Colonic mucosa (tissue), 4 donors: ENCODE measurements at regions of chrX and their contacts with region 1.

Region 1: DNA sequence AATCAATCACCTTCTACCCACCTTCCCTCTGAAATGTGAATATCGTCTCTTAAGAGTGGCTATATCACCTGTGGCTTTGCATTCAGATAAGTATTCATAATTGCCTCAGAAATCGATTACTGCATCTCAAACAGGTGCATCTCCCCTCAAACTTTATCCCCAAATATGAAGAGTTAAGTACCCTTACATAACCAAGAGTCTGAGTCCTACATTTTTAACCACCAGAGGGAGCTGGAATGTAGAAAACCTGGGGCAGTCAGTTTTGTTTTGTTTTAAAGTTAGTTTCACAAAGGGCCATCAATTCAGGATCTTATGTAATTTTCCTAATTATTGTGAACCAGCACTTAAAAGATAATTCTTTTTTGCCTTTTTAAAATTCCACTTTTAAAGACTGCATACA is 5.7 kb downstream of the TCEANC start:
- DNase-seq: peak; percentile 33
- H3K4me3 ChIP-seq: no peak overlapping the region
- H3K27ac ChIP-seq: no peak overlapping the region
- H3K4me1 ChIP-seq: peaks cover 6% of the 10 kb centered on the region
- H3K27me3 ChIP-seq: no peaks in the 10 kb centered on the region
- CTCF ChIP-seq: peak; percentile 68

Region 2: GRCh38 chrX:13734278-13735172 is 75.9 kb after region 1 on chrX and contains the starts of genes OFD1 and TRAPPC2:
- intact Hi-C with region 1: loop called (anchors 5 kb)
- DNase-seq: peak; percentile 96
- H3K4me3 ChIP-seq: peak within 1 kb of the TSS; percentile 53
- H3K27ac ChIP-seq: peak within 1 kb of the TSS; percentile 95
- H3K4me1 ChIP-seq: no peaks in the 10 kb centered on the region
- H3K27me3 ChIP-seq: no peaks in the 10 kb centered on the region
- CTCF ChIP-seq: no peak
- total RNA-seq, gene OFD1: 29.9 to 35.5 TPM
- total RNA-seq, gene TRAPPC2: 20.4 to 20.9 TPM

Region 3: DNA sequence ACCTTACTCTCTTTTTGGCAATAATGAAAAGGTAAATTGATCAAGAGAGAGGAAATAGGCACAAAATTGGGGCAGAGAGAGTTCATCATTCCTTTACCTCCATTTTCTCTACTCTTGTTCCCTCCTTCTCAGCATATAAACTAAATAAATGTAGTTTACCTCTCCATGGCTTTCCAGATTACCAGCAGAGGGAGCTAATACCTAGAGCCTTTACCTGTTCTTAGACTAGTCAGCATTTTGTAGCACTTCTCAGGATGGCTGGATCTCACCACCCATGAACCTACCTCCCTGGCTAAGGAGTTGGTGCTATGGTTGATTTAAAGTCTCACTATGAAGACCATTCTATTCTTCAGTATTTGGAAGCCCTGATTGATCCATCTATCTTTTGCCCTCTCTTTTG is 91.6 kb after region 1 on chrX:
- intact Hi-C with region 1: loop called (anchors 5 kb)
- DNase-seq: no peak
- H3K4me3 ChIP-seq: no peak overlapping the region
- H3K27ac ChIP-seq: no peak overlapping the region
- H3K4me1 ChIP-seq: no peaks in the 10 kb centered on the region
- H3K27me3 ChIP-seq: no peaks in the 10 kb centered on the region
- CTCF ChIP-seq: peak; percentile 40

Region 4: DNA sequence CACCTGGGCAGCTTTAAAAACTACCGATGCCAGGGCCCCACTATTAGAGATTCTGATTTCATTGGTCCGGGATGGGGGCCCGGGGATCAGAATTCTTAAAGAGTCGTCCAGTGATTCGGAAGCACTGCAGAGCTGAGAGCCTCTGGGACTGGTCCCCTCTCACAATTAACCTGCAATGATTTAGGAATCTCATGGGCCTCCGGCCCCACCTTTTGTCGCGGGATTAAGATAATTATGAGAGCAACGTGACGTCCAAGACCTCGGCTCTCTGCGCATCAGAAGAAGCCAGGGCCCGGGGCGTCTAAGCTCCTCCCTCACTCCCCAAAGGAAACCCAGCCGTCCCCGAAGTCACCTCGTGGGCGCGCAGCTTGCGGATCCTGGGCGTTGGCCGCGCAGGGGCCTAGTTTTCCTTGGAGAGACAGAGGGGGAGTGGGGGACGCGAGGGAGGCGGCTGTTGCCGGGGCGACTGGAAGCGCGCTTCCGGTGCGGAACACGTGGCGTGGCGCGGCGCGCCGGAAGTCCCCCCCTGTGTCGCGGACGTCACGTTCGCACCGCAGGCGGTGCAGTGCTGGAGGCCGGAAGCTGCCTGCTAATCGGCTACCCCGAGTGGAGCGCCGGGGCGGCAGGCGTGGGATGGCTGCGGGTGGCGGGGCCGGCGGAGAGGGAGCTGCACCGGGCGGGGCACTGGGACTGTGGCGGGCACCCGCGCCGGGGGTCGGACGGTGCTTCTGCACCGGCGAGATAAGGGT is 371.0 kb after region 1 on chrX and contains the start of gene GEMIN8:
- intact Hi-C with region 1: loop called (anchors 5 kb)
- DNase-seq: peak; percentile 88
- H3K4me3 ChIP-seq: peak within 1 kb of the TSS; percentile 69
- H3K27ac ChIP-seq: peak within 1 kb of the TSS; percentile 78
- H3K4me1 ChIP-seq: no peaks in the 10 kb centered on the region
- H3K27me3 ChIP-seq: no peaks in the 10 kb centered on the region
- CTCF ChIP-seq: no peak
- total RNA-seq, gene GEMIN8: 16.4 to 20.9 TPM